ENCODE measurements at regions of chr11 and their contacts with region 1.

Region 1: GRCh38 chr11:65013692-65014145 is 241 bp upstream of the ARL2 start:
- DNase-seq: peak in 1 of 2 experiments; percentile 96
- H3K4me3 ChIP-seq: peak overlapping the region; percentile 62
- H3K4me3 Mint-ChIP-seq: peak overlapping the region; percentile 83
- H3K27ac Mint-ChIP-seq: peak overlapping the region; percentile 90
- H3K4me1 ChIP-seq: peaks cover 16% of the 10 kb centered on the region
- H3K4me1 Mint-ChIP-seq: peaks cover 22% of the 10 kb centered on the region
- H3K27me3 ChIP-seq: no peaks in the 10 kb centered on the region
- H3K27me3 Mint-ChIP-seq: no peaks in the 10 kb centered on the region
- CTCF ChIP-seq: peak in 1 of 2 experiments; percentile 71

Region 2: DNA sequence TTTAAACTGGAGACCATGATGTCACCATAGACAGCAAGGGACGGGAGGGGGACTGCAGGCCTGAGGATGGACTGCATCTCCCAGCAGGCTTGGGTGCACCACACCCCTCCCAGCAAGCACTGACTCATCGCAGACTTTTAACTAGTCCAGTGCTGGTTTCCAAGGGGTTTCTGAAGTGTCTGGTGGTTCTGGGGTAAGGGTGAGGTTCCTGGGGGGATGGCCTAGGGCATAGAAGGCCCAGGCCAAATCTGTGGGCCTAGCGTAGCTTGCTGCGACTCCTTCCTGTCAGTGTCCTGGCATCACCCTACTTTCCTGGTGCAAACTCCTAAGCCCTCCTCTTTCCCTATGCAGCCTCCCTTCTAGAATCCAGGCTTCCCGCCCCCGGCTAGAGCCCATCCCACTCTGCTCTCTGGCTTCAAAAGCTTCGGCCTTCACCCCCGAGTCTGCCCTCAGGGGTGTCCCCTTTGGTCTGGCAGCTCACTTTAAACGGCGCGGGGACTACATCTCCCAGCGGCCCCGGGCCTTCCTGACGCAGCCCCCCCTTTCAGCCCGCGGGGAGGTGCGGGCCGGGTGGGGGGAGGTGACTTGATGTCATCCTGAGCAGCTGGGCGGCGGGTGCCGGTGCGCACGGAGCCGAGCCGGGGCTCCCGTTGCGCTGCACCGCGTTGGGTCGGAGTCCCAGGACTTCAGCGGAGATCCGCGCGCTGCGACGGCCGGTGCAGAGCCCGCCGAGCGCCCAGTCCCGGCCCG is 89.4 kb before region 1 on chr11 and contains the start of gene PPP2R5B:
- CTCF ChIA-PET with region 1: interaction called, 6 read pairs
- POLR2A ChIA-PET with region 1: no interaction called
- intact Hi-C with region 1: loop called (anchors 2 kb)
- DNase-seq: peak; percentile 93 to 94
- H3K4me3 ChIP-seq: peak within 1 kb of the TSS; percentile 60
- H3K4me3 Mint-ChIP-seq: peak within 1 kb of the TSS; percentile 94
- H3K27ac Mint-ChIP-seq: peak within 1 kb of the TSS; percentile 99
- H3K4me1 ChIP-seq: peaks cover 4% of the 10 kb centered on the region; the same call in 1 of the 2 replicates
- H3K4me1 Mint-ChIP-seq: peaks cover 6% of the 10 kb centered on the region
- H3K27me3 ChIP-seq: no peaks in the 10 kb centered on the region
- H3K27me3 Mint-ChIP-seq: no peaks in the 10 kb centered on the region
- CTCF ChIP-seq: no peak
- total RNA-seq, gene PPP2R5B: 7.4 and 7.7 TPM in 2 replicates

Region 3: DNA sequence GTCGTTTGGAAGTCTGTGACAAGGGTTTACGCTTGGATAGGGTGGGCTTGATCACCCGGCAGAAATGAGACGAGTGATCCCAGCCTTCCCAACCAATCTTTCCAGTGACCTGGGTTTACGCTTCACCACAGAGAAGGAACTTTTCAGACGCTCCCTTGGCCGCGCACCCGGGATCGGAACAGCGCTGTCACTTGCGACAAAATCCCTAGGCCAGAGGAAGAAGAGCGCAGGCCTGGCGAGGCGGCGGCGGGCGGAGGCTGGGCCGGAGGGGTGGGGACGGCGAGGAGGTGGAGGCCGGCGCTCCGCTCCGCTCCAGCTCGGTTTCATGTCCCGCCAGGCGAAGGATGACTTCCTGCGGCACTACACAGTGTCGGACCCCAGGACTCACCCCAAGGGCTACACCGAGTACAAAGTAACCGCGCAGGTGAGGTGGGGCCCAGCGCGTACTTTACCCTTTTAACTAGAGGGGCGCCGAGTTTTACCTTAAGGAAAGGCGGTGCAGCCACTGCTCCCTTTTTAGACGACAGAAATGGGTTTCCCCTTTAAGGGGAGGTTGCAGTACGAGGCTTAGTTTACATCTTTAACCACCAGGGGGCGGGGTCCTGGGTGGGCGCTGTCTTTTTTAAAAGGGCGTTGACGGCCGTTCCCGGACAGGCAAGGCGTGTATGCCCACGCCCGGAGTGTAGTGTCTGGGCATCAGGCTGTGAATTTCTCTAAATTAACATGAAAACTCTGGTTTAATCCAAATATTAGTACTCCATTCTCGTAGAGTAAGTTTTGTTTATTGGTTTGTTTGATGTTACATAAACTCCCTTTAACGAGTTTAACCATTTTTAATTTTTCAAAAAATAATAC is 13.7 kb after region 1 on chr11 and contains the start of gene SNX15:
- CTCF ChIA-PET with region 1: interaction called, 12 read pairs
- POLR2A ChIA-PET with region 1: no interaction called
- intact Hi-C with region 1: loop called (anchors 1 kb)
- DNase-seq: peak; percentile 95 to 96
- H3K4me3 ChIP-seq: peak within 1 kb of the TSS; percentile 66
- H3K4me3 Mint-ChIP-seq: peak within 1 kb of the TSS; percentile 63
- H3K27ac Mint-ChIP-seq: peak within 1 kb of the TSS; percentile 49
- H3K4me1 ChIP-seq: no peaks in the 10 kb centered on the region; the same call in 1 of the 2 replicates
- H3K4me1 Mint-ChIP-seq: peaks cover 7% of the 10 kb centered on the region
- H3K27me3 ChIP-seq: no peaks in the 10 kb centered on the region
- H3K27me3 Mint-ChIP-seq: no peaks in the 10 kb centered on the region
- CTCF ChIP-seq: peak; percentile 83 to 88
- total RNA-seq, gene SNX15: 35.5 and 35.8 TPM in 2 replicates

Region 4: DNA sequence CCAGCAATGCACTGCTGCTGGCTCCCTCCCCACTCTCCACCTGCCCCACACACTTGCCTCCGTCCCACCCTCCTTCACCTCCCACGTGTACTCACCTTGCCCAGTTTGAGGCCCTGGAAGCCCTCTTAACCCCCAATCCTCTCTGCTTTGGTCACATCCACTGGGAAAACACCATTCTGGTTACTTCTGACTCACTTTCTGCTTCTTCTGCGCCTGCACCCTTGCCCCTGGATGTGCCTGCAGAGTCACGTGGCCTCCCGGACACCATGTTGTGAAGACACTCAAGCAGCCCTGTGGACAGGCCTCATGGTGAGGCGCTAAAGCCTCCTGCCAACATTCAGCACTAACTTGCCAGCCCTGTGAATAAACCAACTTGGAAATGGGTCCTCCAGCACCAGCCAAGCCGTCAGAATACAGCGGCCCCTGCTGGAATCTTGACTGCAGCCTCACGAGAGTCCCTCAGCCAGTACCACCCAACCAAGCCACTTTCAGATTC is 47.2 kb after region 1 on chr11:
- CTCF ChIA-PET with region 1: no interaction called
- POLR2A ChIA-PET with region 1: no interaction called
- intact Hi-C with region 1: loop called (anchors 1 kb)
- DNase-seq: peak in 1 of 2 experiments; percentile 38
- H3K4me3 ChIP-seq: no peak overlapping the region
- H3K4me3 Mint-ChIP-seq: no peak overlapping the region
- H3K27ac Mint-ChIP-seq: no peak overlapping the region
- H3K4me1 ChIP-seq: no peaks in the 10 kb centered on the region
- H3K4me1 Mint-ChIP-seq: no peaks in the 10 kb centered on the region
- H3K27me3 ChIP-seq: no peaks in the 10 kb centered on the region
- H3K27me3 Mint-ChIP-seq: no peaks in the 10 kb centered on the region
- CTCF ChIP-seq: peak; percentile 11

Region 5: DNA sequence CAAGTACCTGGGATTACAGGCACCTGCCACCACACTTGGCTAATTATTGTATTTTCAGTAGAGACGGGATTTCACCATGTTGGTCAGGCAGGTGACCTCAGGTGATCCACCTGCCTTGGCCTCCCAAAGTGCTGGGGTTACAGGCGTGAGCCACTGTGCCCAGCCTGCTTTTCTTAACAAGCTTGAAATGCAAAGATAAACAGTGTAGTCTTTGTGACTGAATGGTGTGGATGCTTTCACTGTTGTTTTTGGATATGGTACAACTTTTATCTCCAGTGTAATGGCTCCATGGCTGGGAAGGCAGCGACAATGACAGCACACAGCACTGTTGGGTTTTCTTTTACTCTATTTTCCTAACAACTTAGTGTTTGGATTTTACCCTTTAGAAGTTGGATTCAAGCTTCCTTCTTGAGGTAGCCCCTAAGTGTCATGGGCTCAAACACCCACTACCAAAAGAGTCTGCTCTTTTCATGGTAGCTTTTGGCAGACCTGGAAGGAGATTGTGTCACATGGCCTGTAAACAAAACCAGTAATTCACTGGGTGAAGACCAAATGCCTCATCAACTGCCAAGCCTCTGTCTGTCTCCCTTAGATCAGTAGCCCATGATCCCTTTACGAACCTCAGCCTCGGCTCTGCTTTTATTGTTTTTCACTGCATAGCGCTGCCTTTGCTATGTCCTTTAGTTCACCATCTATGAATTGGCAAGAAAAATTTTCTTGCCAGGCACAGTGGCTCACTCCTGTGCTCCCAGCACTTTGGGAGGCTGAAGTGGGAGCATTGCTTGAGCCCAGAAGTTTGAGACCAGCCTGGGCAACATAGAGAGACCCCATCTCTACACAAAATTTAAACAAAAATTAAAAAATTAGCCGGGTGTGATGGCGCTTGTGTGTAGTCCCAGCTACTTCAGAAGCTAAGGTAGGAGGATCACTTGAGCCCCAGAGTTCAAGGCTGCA is 88.7 kb after region 1 on chr11:
- CTCF ChIA-PET with region 1: no interaction called
- POLR2A ChIA-PET with region 1: no interaction called
- intact Hi-C with region 1: no loop called
- DNase-seq: no peak
- H3K4me3 ChIP-seq: no peak overlapping the region
- H3K4me3 Mint-ChIP-seq: no peak overlapping the region
- H3K27ac Mint-ChIP-seq: no peak overlapping the region
- H3K4me1 ChIP-seq: 0 out of 2 replicates have a peak, but pooled peaks cover under 1% of the 10 kb centered on the region
- H3K4me1 Mint-ChIP-seq: peaks cover 6% of the 10 kb centered on the region
- H3K27me3 ChIP-seq: no peaks in the 10 kb centered on the region
- H3K27me3 Mint-ChIP-seq: no peaks in the 10 kb centered on the region
- CTCF ChIP-seq: no peak

Region 6: DNA sequence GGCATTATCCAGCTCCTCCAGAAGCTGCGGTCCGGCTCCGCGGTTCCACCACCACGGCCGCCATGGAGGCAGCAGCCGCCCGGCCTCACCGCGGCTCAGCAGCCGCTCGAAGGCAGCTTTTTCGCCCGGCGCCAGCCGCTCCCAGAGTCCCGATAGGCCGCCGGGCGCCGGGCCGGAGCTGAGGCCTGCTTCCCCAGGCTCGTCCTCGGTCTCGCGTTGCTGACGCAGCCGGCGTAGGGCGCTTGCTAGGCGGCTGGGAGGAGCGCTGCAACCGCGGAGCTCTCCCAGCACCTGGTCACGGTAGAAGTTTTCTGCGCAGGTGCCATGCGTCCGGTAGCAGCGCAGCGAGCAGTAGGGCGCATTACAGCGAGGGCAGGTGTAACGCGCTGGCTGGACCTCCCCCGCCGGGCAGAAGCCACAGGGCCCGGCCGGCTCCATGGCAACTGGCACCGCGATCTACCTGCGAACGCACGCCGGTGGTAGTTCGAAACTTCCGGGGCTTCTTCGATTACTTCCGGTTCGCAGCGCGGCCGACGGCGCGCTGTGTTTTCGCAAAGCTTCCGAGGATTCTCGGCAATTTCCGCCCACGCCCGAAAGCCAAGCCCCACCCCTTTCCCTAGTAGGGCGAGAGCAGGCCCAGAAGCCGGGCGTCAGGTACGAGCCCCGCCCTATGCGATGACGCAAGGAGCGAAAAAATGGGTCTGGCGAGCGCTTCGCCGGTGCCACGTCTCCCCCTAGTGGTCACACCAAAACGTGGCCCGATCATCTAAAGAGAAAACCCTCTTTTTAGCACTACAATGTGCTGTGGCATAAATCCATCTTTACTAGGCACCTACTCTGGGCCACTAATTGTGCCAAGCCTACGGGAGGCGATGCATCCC is 103.7 kb after region 1 on chr11 and contains the start of gene ZNHIT2:
- CTCF ChIA-PET with region 1: interaction called, 5 read pairs
- POLR2A ChIA-PET with region 1: interaction called, 3 read pairs
- intact Hi-C with region 1: loop called (anchors 1 kb)
- DNase-seq: peak; percentile 99
- H3K4me3 ChIP-seq: peak within 1 kb of the TSS; percentile 87
- H3K4me3 Mint-ChIP-seq: peak within 1 kb of the TSS; percentile 83
- H3K27ac Mint-ChIP-seq: peak within 1 kb of the TSS; percentile 92
- H3K4me1 ChIP-seq: peaks cover 25% of the 10 kb centered on the region
- H3K4me1 Mint-ChIP-seq: peaks cover 13% of the 10 kb centered on the region
- H3K27me3 ChIP-seq: no peaks in the 10 kb centered on the region
- H3K27me3 Mint-ChIP-seq: no peaks in the 10 kb centered on the region
- CTCF ChIP-seq: peak; percentile 93 to 94
- total RNA-seq, gene ZNHIT2: 12.2 and 14.7 TPM in 2 replicates

Region 7: GRCh38 chr11:65204646-65205601 is 191.2 kb after region 1 on chr11:
- CTCF ChIA-PET with region 1: no interaction called
- POLR2A ChIA-PET with region 1: no interaction called
- intact Hi-C with region 1: no loop called
- DNase-seq: peak in 1 of 2 experiments; percentile 73
- H3K4me3 ChIP-seq: no peak overlapping the region
- H3K4me3 Mint-ChIP-seq: no peak overlapping the region
- H3K27ac Mint-ChIP-seq: peak overlapping the region; percentile 74
- H3K4me1 ChIP-seq: peaks cover 7% of the 10 kb centered on the region
- H3K4me1 Mint-ChIP-seq: peaks cover 2% of the 10 kb centered on the region
- H3K27me3 ChIP-seq: no peaks in the 10 kb centered on the region
- H3K27me3 Mint-ChIP-seq: no peaks in the 10 kb centered on the region
- CTCF ChIP-seq: peak; percentile 95 to 98